ENCODE measurements at regions of chr2 and their contacts with region 1.

Region 1: DNA sequence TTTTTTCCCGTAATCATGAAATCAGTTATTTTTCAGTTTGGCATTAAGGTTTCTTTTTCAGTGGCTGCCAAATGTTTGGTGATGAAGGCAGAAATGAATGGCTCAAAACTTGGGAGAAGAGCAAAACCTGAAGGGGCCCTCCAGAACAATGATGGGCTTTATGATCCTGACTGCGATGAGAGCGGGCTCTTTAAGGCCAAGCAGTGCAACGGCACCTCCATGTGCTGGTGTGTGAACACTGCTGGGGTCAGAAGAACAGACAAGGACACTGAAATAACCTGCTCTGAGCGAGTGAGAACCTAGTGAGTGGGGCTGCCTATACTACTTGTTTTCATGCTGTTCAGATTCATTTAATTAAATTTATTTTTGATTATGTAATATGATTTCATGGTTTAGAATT is 29.2 kb upstream of the MSH2 start:
- DNase-seq: no peak
- ATAC-seq: no peak
- H3K4me3 ChIP-seq: no peak overlapping the region
- H3K4me3 Mint-ChIP-seq: no peak overlapping the region
- H3K27ac ChIP-seq: no peak overlapping the region
- H3K27ac Mint-ChIP-seq: no peak overlapping the region
- H3K4me1 ChIP-seq: peaks cover 10 to 11% of the 10 kb centered on the region in 2 donors
- H3K4me1 Mint-ChIP-seq: peaks cover 3% of the 10 kb centered on the region
- H3K27me3 ChIP-seq: peaks cover 0 to 13% (median 4%) of the 10 kb centered on the region in 4 experiments
- H3K27me3 Mint-ChIP-seq: peaks cover 6% of the 10 kb centered on the region
- CTCF ChIP-seq: no peak

Region 2: DNA sequence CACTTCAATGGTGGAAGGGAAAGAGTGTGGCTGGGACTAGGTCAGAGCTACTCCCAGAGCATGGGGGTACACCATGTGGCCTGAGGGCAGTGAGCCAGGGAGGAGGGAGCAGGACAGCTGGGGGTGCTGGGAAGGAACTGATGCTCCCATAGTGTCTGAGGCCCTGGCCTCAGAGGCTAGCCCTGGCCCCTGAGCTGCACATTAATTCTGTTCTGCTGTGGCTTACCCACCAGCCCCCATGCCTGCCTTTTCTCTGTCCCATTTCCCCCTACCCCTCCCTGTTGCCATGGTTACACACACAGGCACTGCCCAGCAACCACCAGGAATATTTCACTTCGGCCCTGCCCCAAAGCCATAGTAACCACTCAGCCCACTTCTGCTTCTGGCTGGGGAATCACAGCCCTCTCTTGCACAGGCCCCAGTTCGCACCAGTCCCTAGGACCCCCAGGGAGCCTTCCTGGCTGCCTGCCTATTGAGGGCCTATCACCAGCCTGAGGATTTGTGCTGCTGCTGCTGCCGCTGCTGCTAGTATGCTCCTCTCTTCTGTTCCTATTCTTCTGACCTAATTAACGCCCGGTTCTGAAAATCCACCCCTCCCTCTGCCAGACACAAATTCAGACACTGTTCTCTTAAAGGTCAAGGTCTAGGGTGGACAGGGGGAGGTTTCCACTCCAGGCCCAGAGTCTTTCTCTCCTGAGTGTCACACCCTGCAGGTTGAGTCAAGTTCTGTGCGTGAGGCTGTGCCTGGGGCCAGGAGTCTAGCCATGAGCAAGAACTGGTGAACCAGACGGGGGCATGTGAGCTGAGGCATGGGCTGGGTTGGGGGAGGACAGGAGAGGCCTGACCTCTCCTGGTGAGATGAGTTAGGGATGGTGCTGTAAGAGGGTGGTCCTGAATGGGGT is 371.0 kb before region 1 on chr2:
- CTCF ChIA-PET with region 1: no interaction called
- POLR2A ChIA-PET with region 1: no interaction called
- intact Hi-C with region 1: no loop called
- DNase-seq: no peak
- ATAC-seq: no peak
- H3K4me3 ChIP-seq: no peak overlapping the region
- H3K4me3 Mint-ChIP-seq: no peak overlapping the region
- H3K27ac ChIP-seq: no peak overlapping the region
- H3K27ac Mint-ChIP-seq: no peak overlapping the region
- H3K4me1 ChIP-seq: no peaks in the 10 kb centered on the region
- H3K4me1 Mint-ChIP-seq: peaks cover 4% of the 10 kb centered on the region
- H3K27me3 ChIP-seq: no peaks in the 10 kb centered on the region
- H3K27me3 Mint-ChIP-seq: no peaks in the 10 kb centered on the region
- CTCF ChIP-seq: no peak

Region 3: DNA sequence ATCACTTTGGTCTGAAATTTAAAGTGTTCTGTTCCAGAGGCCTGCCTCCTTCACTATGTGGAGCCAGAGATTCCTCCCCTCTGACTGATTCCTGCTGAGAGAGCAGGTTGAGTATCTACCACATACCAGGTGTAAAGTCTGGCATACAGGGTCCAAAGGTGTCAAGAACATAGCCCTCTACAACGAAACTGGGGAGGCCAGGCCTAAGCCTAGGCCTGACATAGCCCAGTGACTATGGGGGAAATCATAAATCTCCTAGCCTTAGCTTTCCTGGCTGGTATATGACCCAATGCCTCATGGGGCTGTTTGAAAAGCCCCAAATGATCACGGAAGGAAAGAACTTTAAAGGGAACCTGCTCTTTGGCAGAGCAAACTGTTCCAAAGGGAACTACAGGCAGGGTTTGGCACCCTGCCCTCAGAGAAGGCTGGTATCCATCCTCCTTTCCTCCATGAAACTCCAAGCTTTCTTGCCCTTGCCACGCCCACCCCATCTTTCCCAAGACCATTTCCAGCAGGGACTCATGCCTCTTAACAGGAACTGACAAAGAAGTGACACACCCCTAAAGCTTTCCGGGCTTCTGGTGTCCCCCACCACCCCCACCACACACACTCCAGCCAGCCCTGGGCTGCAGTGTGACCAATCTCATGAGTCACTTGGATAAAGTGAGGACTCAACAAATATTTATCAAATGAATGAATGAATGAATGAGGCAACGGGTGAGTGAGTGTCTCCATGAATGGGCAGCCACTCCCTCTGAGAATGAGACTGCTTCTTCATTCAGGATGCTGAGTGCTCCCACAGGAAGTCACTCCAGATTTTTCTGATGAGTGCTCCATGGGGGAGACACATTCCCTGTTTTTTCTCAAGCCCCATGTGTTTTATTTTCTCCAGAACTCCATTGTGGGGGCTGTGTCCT is 104.2 kb before region 1 on chr2:
- CTCF ChIA-PET with region 1: no interaction called
- POLR2A ChIA-PET with region 1: no interaction called
- intact Hi-C with region 1: no loop called
- DNase-seq: no peak
- ATAC-seq: no peak
- H3K4me3 ChIP-seq: no peak overlapping the region
- H3K4me3 Mint-ChIP-seq: no peak overlapping the region
- H3K27ac ChIP-seq: no peak overlapping the region
- H3K27ac Mint-ChIP-seq: no peak overlapping the region
- H3K4me1 ChIP-seq: peaks cover 18 to 27% of the 10 kb centered on the region in 2 donors
- H3K4me1 Mint-ChIP-seq: peaks cover 23% of the 10 kb centered on the region
- H3K27me3 ChIP-seq: no peaks in the 10 kb centered on the region
- H3K27me3 Mint-ChIP-seq: no peaks in the 10 kb centered on the region
- CTCF ChIP-seq: no peak

Region 4: DNA sequence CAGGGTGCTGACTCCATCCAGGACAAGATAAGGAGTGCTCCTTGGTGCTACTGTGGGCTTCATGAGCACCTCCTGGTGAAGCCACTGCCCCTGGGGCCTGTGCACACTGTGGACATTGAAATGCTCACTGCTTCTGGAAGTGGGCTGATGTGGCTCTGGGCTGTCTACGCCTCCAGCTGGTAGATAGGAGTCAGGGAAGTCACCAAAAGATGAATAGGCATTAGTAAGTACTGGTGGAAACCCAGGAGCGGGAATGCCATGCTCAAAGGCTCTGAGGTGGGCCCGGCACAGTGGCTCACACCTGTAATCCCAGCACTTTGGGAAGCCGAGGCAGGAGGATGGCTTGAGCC is 50.0 kb before region 1 on chr2:
- CTCF ChIA-PET with region 1: no interaction called
- POLR2A ChIA-PET with region 1: no interaction called
- intact Hi-C with region 1: no loop called
- DNase-seq: no peak
- ATAC-seq: no peak
- H3K4me3 ChIP-seq: no peak overlapping the region
- H3K4me3 Mint-ChIP-seq: no peak overlapping the region
- H3K27ac ChIP-seq: no peak overlapping the region
- H3K27ac Mint-ChIP-seq: no peak overlapping the region
- H3K4me1 ChIP-seq: peaks cover 10 to 31% of the 10 kb centered on the region in 2 donors
- H3K4me1 Mint-ChIP-seq: peaks cover 8% of the 10 kb centered on the region
- H3K27me3 ChIP-seq: peaks cover 0 to 3% (median 0%) of the 10 kb centered on the region in 4 experiments
- H3K27me3 Mint-ChIP-seq: no peaks in the 10 kb centered on the region
- CTCF ChIP-seq: no peak

Region 5: DNA sequence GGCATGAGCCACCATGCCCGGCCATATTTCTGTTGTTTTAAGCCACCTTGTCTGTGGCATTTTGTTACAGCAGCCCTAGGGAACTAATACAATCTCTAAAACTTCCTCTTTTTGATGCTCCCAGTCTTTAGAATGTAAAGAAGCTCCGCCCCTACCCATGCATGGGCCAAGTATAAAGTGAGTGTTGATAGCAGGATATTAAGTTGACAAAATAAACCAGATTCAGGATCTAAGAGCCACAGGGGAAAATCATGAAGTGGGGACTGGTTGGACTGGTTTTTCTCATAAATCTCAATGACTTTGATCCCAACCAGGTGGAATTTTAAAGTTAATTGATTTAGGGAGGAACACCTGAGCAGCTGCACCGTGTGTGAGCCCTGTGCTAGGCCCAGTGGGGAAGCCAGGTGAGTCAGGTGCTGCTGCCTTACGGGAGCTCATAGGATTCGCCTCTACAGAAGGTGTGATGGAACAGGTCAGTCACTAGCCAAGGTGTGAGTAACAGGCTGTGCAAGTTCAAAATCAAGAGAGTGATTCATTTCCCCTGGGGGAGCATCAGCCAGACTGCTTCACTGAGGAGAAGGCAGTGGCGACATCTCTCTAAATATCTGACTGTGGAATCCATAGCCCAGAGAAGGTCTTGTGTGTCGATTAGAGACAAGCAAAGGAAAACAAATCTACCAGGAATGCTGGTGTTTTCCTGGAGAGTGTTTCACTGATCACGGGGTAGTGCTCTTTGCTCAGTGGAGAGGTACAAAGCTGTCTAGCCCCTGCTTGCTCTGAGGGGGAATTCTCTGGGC is 33.8 kb before region 1 on chr2:
- CTCF ChIA-PET with region 1: interaction called, 10 read pairs
- POLR2A ChIA-PET with region 1: no interaction called
- intact Hi-C with region 1: no loop called
- DNase-seq: no peak
- ATAC-seq: no peak
- H3K4me3 ChIP-seq: no peak overlapping the region
- H3K4me3 Mint-ChIP-seq: no peak overlapping the region
- H3K27ac ChIP-seq: no peak overlapping the region
- H3K27ac Mint-ChIP-seq: no peak overlapping the region
- H3K4me1 ChIP-seq: peaks cover 21 to 26% of the 10 kb centered on the region in 2 donors
- H3K4me1 Mint-ChIP-seq: peaks cover 30% of the 10 kb centered on the region
- H3K27me3 ChIP-seq: peaks cover 0 to 7% (median 1%) of the 10 kb centered on the region in 4 experiments
- H3K27me3 Mint-ChIP-seq: peaks cover 8% of the 10 kb centered on the region
- CTCF ChIP-seq: no peak

Measured in B cell (primary cell).